MCF 10A (cell line): ENCODE measurements at regions of chr9 and their contacts with region 1.

Region 1: GRCh38 chr9:28073270-28073669 is 500.0 kb upstream of the C9orf72 start:
- DNase-seq: peak; percentile 65
- H3K4me3 Mint-ChIP-seq: no peak overlapping the region
- H3K27ac Mint-ChIP-seq: no peak overlapping the region
- H3K4me1 Mint-ChIP-seq: no peaks in the 10 kb centered on the region
- H3K27me3 Mint-ChIP-seq: peaks cover 17% of the 10 kb centered on the region
- CTCF ChIP-seq: peak; percentile 75

Region 2: GRCh38 chr9:27573634-27574590 is 499.4 kb before region 1 on chr9:
- CTCF ChIA-PET with region 1: no interaction called
- POLR2A ChIA-PET with region 1: interaction called, 3 read pairs
- intact Hi-C with region 1: loop called (anchors 10 kb)
- DNase-seq: peak; percentile 100
- H3K4me3 Mint-ChIP-seq: peak overlapping the region; percentile 83
- H3K27ac Mint-ChIP-seq: peak overlapping the region; percentile 100
- H3K4me1 Mint-ChIP-seq: peaks cover 11% of the 10 kb centered on the region
- H3K27me3 Mint-ChIP-seq: no peaks in the 10 kb centered on the region
- CTCF ChIP-seq: no peak

Region 3: GRCh38 chr9:27977931-27978330 is 95.3 kb before region 1 on chr9:
- CTCF ChIA-PET with region 1: no interaction called
- POLR2A ChIA-PET with region 1: no interaction called
- intact Hi-C with region 1: no loop called
- DNase-seq: peak; percentile 4
- H3K4me3 Mint-ChIP-seq: no peak overlapping the region
- H3K27ac Mint-ChIP-seq: no peak overlapping the region
- H3K4me1 Mint-ChIP-seq: no peaks in the 10 kb centered on the region
- H3K27me3 Mint-ChIP-seq: no peaks in the 10 kb centered on the region
- CTCF ChIP-seq: no peak

Region 4: GRCh38 chr9:28037968-28038367 is 35.3 kb before region 1 on chr9:
- CTCF ChIA-PET with region 1: no interaction called
- POLR2A ChIA-PET with region 1: no interaction called
- intact Hi-C with region 1: no loop called
- DNase-seq: no peak
- H3K4me3 Mint-ChIP-seq: no peak overlapping the region
- H3K27ac Mint-ChIP-seq: no peak overlapping the region
- H3K4me1 Mint-ChIP-seq: no peaks in the 10 kb centered on the region
- H3K27me3 Mint-ChIP-seq: peaks cover 48% of the 10 kb centered on the region
- CTCF ChIP-seq: no peak

Region 5: GRCh38 chr9:28086881-28087280 is 13.6 kb after region 1 on chr9:
- CTCF ChIA-PET with region 1: interaction called, 14 read pairs
- POLR2A ChIA-PET with region 1: interaction called, 3 read pairs
- intact Hi-C with region 1: no loop called
- DNase-seq: peak; percentile 57
- H3K4me3 Mint-ChIP-seq: no peak overlapping the region
- H3K27ac Mint-ChIP-seq: peak overlapping the region; percentile 36
- H3K4me1 Mint-ChIP-seq: peaks cover 12% of the 10 kb centered on the region
- H3K27me3 Mint-ChIP-seq: no peaks in the 10 kb centered on the region
- CTCF ChIP-seq: no peak